Caco-2 (cell line): ENCODE measurements at regions of chr1 and their contacts with region 1.

Region 1: GRCh38 chr1:188782219-188782841 is 1695.3 kb downstream of the BRINP3 start:
- DNase-seq: peak; percentile 51 to 68
- H3K4me3 ChIP-seq: no peak overlapping the region
- H3K4me3 Mint-ChIP-seq: no peak overlapping the region
- H3K27ac Mint-ChIP-seq: no peak overlapping the region
- H3K4me1 ChIP-seq: no peaks in the 10 kb centered on the region
- H3K4me1 Mint-ChIP-seq: no peaks in the 10 kb centered on the region
- H3K27me3 ChIP-seq: no peaks in the 10 kb centered on the region
- H3K27me3 Mint-ChIP-seq: no peaks in the 10 kb centered on the region
- CTCF ChIP-seq: peak; percentile 57 to 83

Region 2: DNA sequence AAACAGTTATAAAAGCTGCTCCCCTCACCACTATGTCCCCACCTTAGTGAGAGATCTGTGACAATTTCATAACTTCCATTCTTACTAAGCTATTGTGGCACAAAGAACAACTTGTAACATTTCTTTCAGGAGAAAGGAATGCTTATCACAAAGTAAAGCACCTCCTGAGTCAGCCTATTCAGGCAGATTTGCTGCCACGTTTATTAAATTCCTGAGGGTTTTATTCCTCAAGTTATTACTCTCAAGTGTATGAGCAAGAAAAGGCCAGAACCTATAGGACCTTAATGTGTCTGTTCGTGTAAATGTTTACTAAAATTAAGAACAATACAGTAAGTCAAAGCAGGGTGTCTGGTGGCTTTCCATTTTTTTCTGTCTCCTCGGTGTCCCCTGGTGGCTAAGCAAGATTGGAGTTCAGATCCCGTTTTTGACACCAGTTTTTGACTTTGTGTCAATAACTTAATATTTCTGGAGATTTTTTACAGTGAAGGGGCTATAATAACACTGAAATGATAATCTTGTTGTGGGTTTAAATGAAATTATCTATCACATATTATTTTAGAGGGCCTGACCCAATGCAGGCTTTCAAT is 155.7 kb after region 1 on chr1:
- CTCF ChIA-PET with region 1: no interaction called
- POLR2A ChIA-PET with region 1: no interaction called
- intact Hi-C with region 1: loop called (anchors 1 kb)
- DNase-seq: no peak
- H3K4me3 ChIP-seq: no peak overlapping the region
- H3K4me3 Mint-ChIP-seq: no peak overlapping the region
- H3K27ac Mint-ChIP-seq: no peak overlapping the region
- H3K4me1 ChIP-seq: no peaks in the 10 kb centered on the region
- H3K4me1 Mint-ChIP-seq: no peaks in the 10 kb centered on the region
- H3K27me3 ChIP-seq: no peaks in the 10 kb centered on the region
- H3K27me3 Mint-ChIP-seq: no peaks in the 10 kb centered on the region
- CTCF ChIP-seq: no peak

Region 3: DNA sequence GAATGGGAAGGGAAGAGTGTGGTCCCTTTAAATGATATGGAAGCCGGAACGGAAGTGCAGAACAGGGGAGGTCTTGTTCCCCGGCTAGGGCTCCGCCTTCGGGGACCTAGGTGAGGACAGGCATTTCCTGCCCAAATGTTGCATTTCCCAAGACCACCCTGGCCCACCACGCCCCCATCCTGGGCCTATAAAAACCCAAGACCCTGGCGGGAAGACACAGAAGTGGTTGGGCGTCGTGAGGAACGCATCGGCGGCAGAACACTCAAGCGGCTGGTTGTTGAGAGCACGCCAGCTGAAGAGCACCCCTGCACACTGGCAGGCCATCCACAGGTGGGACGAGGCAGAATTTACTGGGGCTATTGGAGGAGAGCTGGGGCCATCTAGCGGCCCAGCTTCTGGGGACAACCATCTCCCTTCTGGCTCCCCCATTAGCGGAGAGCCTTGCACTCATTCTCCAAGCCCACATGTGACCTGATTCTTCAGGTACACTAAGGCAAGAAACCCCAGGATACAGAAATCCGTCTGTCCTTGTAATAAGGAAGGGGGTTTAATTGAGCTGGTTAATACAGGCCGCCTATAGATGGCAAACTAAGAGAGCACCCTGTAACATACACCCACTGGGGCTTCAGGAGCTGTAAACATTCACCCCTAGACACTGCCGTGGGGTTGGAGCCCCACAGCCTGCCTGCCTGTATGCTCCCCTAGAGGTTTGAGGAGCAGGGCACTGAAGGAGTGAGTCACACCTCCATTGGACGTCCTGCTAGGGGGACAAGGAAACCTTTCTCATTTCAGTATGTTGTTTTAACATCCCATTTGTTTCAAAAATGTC is 367.4 kb after region 1 on chr1:
- CTCF ChIA-PET with region 1: interaction called, 18 read pairs
- POLR2A ChIA-PET with region 1: no interaction called
- intact Hi-C with region 1: loop called (anchors 1 kb)
- DNase-seq: peak; percentile 87 to 88
- H3K4me3 ChIP-seq: peak overlapping the region; percentile 48
- H3K4me3 Mint-ChIP-seq: peak overlapping the region; percentile 84
- H3K27ac Mint-ChIP-seq: peak overlapping the region; percentile 83
- H3K4me1 ChIP-seq: no peaks in the 10 kb centered on the region
- H3K4me1 Mint-ChIP-seq: no peaks in the 10 kb centered on the region
- H3K27me3 ChIP-seq: no peaks in the 10 kb centered on the region
- H3K27me3 Mint-ChIP-seq: peaks cover 2% of the 10 kb centered on the region
- CTCF ChIP-seq: peak; percentile 56 to 68